ENCODE measurements at regions of chr9 and their contacts with region 1.

Region 1: DNA sequence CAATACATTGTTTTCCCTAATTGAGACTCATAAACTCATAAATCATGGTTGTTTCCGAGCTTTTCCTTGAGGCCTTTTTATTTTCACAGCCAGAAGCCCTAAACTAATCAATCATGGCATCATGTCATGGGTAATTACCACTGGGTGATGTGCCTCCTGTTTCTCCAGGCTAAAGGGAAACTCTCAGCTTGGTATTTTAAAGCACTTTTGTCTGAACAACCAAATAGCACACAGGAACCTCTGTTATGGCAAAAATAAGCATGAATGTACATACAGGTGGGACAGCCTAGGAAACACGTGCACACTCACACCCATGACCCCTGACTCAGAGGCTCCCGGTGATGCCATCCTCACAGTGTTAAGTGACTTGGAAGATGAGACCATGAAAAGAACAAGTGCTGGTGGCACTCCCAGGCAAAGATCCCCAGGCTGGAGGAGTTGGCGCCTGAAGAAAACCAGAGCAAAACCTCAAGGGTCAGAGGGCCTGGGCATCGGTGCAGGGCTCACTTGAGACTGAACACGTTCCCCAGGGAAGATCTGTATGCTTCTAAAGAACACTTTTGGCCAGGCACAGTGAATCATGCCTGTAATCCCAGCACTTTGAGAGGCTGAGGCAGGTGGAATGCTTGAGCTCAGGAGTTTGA is 154.3 kb downstream of the ROR2 start:
- DNase-seq: no peak
- H3K4me3 Mint-ChIP-seq: no peak overlapping the region
- H3K27ac Mint-ChIP-seq: peak overlapping the region; percentile 71
- H3K4me1 Mint-ChIP-seq: peaks cover 24% of the 10 kb centered on the region
- H3K27me3 Mint-ChIP-seq: peaks cover 5% of the 10 kb centered on the region

Region 2: GRCh38 chr9:91734371-91734981 is 61.2 kb before region 1 on chr9:
- intact Hi-C with region 1: no loop called
- DNase-seq: peak; percentile 33
- H3K4me3 Mint-ChIP-seq: no peak overlapping the region
- H3K27ac Mint-ChIP-seq: no peak overlapping the region
- H3K4me1 Mint-ChIP-seq: peaks cover 8% of the 10 kb centered on the region
- H3K27me3 Mint-ChIP-seq: peaks cover 2% of the 10 kb centered on the region

Region 3: GRCh38 chr9:91857291-91858212 is 61.8 kb after region 1 on chr9:
- intact Hi-C with region 1: no loop called
- DNase-seq: no peak
- H3K4me3 Mint-ChIP-seq: no peak overlapping the region
- H3K27ac Mint-ChIP-seq: no peak overlapping the region
- H3K4me1 Mint-ChIP-seq: no peaks in the 10 kb centered on the region
- H3K27me3 Mint-ChIP-seq: peaks cover 8% of the 10 kb centered on the region

Region 4: DNA sequence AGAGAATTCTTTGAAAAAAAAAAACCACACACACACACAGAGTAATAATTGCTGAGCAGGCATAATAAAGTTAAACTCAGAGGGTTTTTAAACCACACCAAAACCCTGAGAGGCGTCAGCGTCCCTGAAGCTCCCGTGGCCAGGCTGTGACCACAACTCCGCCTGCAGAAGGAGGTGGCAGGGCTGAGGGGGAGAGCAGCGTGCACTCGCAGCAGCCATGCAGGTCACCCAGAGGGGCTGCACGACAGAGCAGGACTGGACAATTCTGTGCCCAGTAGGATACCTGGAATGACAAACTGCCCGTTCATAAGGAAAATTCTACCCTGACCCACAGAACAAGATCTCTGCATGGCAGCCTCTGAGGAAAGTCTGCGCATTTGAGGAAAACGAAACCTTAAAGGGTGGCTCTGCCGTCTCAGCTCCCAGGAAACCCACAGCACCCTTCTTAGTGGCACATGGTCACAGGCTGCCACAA is 110.3 kb after region 1 on chr9:
- intact Hi-C with region 1: loop called (anchors 5 kb)
- DNase-seq: peak; percentile 69
- H3K4me3 Mint-ChIP-seq: no peak overlapping the region
- H3K27ac Mint-ChIP-seq: peak overlapping the region; percentile 62
- H3K4me1 Mint-ChIP-seq: peaks cover 50% of the 10 kb centered on the region
- H3K27me3 Mint-ChIP-seq: peaks cover 5% of the 10 kb centered on the region

Region 5: DNA sequence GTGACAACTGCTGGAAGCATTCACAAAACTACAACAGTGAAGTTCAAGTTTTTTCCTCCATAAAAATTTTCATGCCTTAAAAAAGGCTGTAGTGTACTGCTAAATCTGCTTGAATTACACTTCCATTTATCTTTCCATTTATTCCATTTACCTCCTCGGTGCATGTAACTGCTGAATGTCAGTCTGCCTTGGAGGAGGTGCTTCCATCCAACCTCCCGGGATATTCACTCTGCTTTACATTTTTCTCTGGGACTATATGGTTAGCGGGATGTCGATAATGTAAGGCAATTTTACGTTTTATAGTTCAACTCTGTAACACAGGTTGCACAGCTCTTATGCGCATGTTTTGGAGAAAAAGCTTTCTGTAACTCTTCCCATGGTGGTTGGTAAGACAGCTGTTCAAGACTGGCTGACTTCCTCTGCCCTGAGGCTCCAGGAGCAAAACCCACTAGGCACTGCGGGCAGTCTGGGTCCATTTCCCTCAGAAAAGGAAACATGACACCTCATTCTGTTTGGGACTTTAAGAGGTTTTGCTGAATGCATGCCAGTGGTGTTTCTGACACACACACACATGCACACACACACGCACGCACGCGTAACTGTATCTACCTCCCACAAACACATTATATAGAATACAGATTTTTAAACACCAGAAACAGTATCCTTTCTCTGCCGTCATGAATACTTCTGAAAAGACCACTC is 253.4 kb after region 1 on chr9:
- intact Hi-C with region 1: no loop called
- DNase-seq: no peak
- H3K4me3 Mint-ChIP-seq: no peak overlapping the region
- H3K27ac Mint-ChIP-seq: no peak overlapping the region
- H3K4me1 Mint-ChIP-seq: no peaks in the 10 kb centered on the region
- H3K27me3 Mint-ChIP-seq: no peaks in the 10 kb centered on the region